ENCODE measurements at regions of chr5 and their contacts with region 1.

Region 1: GRCh38 chr5:1641560-1642166 is 117.9 kb upstream of the LPCAT1 start:
- DNase-seq: peak; percentile 68 to 98 (median 86)

Region 2: GRCh38 chr5:923281-923873 is 718.3 kb before region 1 on chr5:
- intact Hi-C with region 1: loop called (anchors 10 kb)
- DNase-seq: peak in 7 of 10 donors; percentile 62 to 94 (median 66)

Region 3: GRCh38 chr5:1167728-1168709 is 473.6 kb before region 1 on chr5:
- intact Hi-C with region 1: loop called (anchors 5 kb)
- DNase-seq: peak in 9 of 10 donors; percentile 52 to 96 (median 76)

Region 4: DNA sequence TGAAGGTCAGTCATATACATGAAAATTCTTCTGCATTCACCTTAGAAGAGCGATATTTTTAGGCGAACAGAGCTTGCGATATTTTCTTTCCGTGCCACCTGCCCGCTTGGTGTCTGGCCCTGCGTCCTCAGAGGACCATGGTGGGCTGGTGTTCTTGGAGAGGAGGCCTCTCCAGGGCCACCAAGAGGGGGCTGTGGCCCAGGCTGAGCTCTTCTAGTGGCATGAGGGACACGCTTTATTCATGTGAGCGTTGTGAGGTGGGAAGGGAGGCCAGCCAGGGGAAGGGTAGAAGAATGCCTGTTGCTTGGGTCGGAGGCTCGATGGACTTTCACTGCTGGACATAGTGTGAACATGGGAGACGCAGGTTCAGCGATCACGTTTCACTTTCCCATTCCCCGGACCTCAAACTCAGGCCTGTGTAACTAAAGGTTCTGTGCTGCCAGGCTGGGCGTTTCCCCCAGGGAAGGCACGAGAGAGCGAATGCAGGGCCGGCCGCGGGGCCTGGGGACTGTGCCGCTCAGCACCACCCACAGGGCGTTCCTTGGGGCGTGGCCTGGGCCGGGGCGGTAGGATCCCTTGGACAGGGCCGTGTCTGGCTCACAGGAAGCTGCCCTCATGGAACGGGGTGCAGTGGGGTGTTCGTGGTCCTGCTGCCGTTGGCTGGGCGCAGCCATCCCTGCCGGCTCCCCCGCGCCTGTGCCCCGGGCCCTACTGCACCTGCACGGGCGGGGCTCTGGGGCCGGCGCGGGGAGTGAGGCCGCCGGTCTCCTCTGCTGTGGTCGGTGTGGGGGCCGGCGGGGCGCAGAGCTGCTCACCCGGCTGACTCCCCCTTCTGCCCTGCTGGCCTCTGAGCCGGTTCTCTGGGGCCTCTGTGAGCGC is 256.0 kb before region 1 on chr5:
- intact Hi-C with region 1: loop called (anchors 10 kb)
- DNase-seq: peak; percentile 64 to 97 (median 82)

Region 5: DNA sequence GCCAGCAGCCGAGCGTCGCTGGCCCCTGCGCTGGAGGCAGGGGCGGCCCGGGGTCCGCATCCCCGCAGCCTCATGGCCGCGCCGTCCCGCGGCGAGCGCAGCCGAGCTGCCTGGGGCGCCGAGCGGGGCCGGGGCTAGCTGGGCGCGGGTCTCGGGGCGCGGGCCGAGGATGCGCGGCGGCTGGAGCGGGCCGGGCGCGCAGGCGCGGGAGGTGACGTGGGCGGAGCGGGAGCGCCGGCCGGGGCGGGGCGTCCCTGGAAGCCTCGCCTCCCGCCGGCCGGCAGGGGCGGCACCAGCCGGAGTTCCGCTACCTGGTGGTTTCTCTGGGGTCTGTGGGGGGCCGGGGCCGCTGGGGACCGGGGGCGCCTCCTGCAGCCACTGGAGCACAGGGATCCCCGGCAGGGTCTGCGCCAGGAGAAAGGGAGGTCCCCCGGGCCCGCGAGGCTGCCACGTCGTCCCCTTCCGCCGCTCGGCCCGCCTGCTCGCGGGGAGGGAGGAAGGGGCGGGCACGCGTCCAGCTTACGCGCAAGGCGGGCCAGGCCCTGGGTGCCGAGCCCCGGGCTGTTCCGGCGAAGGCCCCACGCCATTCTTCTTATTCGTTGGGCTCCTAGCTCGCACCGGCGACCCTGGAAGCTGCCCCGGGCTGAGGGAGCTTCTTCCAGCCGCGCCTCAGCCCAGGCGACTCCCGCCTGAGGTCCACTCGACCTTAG is 117.7 kb before region 1 on chr5 and contains the start of gene LPCAT1:
- intact Hi-C with region 1: loop called (anchors 10 kb)
- DNase-seq: peak; percentile 55 to 97 (median 75)

Region 6: GRCh38 chr5:1948663-1949652 is 307.3 kb after region 1 on chr5:
- intact Hi-C with region 1: no loop called
- DNase-seq: peak in 1 of 10 donors; percentile 78

Measured in posterior cingulate gyrus (tissue), 11 donors.